ENCODE measurements at regions of chr9 and their contacts with region 1.

Region 1: DNA sequence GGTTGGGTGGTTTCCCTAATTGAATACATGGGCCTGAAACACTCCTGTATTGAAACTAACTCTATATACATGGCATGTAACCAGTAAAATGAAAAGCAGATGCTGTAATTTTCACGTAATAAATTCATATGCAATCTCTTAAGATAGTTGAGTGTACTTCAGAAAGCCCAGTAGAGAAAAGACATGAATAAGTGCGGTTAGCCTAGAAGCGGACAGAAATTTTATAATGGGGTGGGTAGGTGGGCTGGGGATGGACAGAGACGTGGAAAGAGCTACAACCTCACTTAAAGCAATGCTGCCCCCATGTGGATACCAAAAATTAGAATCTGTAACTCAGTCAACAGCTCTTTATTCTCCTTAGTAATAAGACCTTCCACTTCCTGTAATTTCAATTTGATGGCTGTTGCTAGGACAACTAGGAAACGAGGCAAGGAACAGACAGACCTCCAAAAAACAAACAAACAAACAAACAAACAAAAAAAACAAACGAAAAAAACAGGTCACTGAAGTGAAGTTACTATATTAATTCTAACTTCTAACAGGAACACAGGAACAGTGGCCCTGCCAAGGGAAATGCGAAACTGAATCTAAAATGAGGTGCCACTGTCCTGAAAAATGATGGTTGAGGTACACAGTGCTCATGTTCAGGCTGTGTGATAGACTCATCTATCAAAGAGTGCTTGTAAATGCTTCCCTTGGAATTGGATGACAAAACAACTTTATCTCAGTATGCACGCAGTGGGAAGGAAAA is 103.4 kb upstream of the GNA14 start:
- DNase-seq: peak; percentile 93
- H3K4me3 ChIP-seq: no peak overlapping the region
- H3K27ac ChIP-seq: peak overlapping the region; percentile 86
- H3K4me1 ChIP-seq: peaks cover 50% of the 10 kb centered on the region
- H3K27me3 ChIP-seq: no peaks in the 10 kb centered on the region
- CTCF ChIP-seq: peak; percentile 75

Region 2: GRCh38 chr9:77177161-77177893 is 574.2 kb before region 1 on chr9 and contains the start of gene VPS13A:
- CTCF ChIA-PET with region 1: no interaction called
- POLR2A ChIA-PET with region 1: no interaction called
- intact Hi-C with region 1: loop called (anchors 10 kb)
- DNase-seq: peak; percentile 98
- H3K4me3 ChIP-seq: peak within 1 kb of the TSS; percentile 89
- H3K27ac ChIP-seq: peak within 1 kb of the TSS; percentile 70
- H3K4me1 ChIP-seq: peaks cover 12% of the 10 kb centered on the region
- H3K27me3 ChIP-seq: peaks cover 4% of the 10 kb centered on the region
- CTCF ChIP-seq: peak; percentile 41; the same call in 1 of the 2 replicates
- total RNA-seq, gene VPS13A: 32.2 and 39.5 TPM in 2 replicates

Region 3: DNA sequence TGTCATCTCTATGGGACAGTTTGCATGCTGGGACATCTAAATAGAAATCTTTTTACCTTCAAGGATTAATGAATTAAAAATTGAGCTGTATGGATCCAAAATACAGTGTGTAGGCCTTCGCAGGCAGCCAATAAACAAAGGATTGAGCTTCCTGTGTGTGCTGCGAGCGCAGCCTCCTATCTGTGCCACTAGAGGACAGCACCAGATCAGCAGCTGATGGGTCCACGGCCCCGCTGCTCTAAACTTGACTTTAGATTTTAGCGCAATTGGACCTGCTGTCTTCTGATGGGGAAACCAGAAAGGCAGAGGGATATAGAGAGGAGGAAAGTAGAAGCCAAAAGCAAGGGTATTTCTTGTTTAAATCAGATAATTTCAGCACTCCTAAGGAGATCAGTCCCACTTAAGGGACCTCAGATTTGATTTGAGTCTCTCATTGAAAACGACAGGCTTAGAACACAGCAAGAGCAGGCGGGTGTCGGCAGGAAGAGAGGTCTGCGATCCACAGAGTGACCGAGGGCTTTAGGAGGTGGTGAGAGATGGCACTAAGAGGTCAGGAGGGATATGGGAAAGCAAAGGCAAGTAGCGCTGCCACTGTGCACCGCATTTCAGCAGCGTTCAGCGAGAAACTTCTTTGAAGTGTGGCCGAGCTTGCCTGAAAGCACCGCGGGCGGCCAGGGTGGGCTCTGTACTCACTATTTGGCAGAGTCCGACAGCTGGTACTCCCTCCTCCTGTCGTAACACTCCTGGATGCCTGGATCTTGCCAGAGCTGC is 317.7 kb before region 1 on chr9:
- CTCF ChIA-PET with region 1: interaction called, 21 read pairs
- POLR2A ChIA-PET with region 1: no interaction called
- intact Hi-C with region 1: loop called (anchors 2 kb)
- DNase-seq: peak; percentile 90
- H3K4me3 ChIP-seq: no peak overlapping the region
- H3K27ac ChIP-seq: no peak overlapping the region
- H3K4me1 ChIP-seq: peaks cover 33% of the 10 kb centered on the region
- H3K27me3 ChIP-seq: peaks cover 3% of the 10 kb centered on the region
- CTCF ChIP-seq: peak; percentile 99

Region 4: GRCh38 chr9:77456829-77457437 is 294.6 kb before region 1 on chr9:
- CTCF ChIA-PET with region 1: interaction called, 11 read pairs
- POLR2A ChIA-PET with region 1: no interaction called
- intact Hi-C with region 1: loop called (anchors 1 kb)
- DNase-seq: peak; percentile 95
- H3K4me3 ChIP-seq: no peak overlapping the region
- H3K27ac ChIP-seq: peak overlapping the region; percentile 70
- H3K4me1 ChIP-seq: peaks cover 20% of the 10 kb centered on the region
- H3K27me3 ChIP-seq: no peaks in the 10 kb centered on the region
- CTCF ChIP-seq: peak; percentile 94

Region 5: GRCh38 chr9:77598524-77598923 is 153.0 kb before region 1 on chr9:
- CTCF ChIA-PET with region 1: no interaction called
- POLR2A ChIA-PET with region 1: no interaction called
- intact Hi-C with region 1: no loop called
- DNase-seq: peak; percentile 77
- H3K4me3 ChIP-seq: no peak overlapping the region
- H3K27ac ChIP-seq: peak overlapping the region; percentile 49
- H3K4me1 ChIP-seq: peaks cover 61% of the 10 kb centered on the region
- H3K27me3 ChIP-seq: no peaks in the 10 kb centered on the region
- CTCF ChIP-seq: no peak

Region 6: GRCh38 chr9:78035383-78035993 is 284.0 kb after region 1 on chr9:
- CTCF ChIA-PET with region 1: interaction called, 3 read pairs
- POLR2A ChIA-PET with region 1: no interaction called
- intact Hi-C with region 1: loop called (anchors 5 kb)
- DNase-seq: peak; percentile 89
- H3K4me3 ChIP-seq: no peak overlapping the region
- H3K27ac ChIP-seq: no peak overlapping the region
- H3K4me1 ChIP-seq: peaks cover 38% of the 10 kb centered on the region
- H3K27me3 ChIP-seq: no peaks in the 10 kb centered on the region
- CTCF ChIP-seq: peak; percentile 92